ENCODE measurements at regions of chrX and their contacts with region 1.

Region 1: GRCh38 chrX:65595460-65595876 is 60.9 kb upstream of the LAS1L start:
- DNase-seq: peak; percentile 90
- H3K4me3 ChIP-seq: no peak overlapping the region
- H3K27ac ChIP-seq: peak overlapping the region; percentile 92
- H3K4me1 ChIP-seq: peaks cover 28% of the 10 kb centered on the region
- H3K27me3 ChIP-seq: no peaks in the 10 kb centered on the region
- CTCF ChIP-seq: peak; percentile 88 to 98
- POLR2A ChIP-seq: no peak

Region 2: GRCh38 chrX:65720381-65720964 is 125.0 kb after region 1 on chrX:
- CTCF ChIA-PET with region 1: interaction called, 3 read pairs
- POLR2A ChIA-PET with region 1: no interaction called
- dilution Hi-C with region 1: no loop called
- intact Hi-C with region 1: loop called (anchors 1 kb)
- DNase-seq: peak; percentile 75
- H3K4me3 ChIP-seq: no peak overlapping the region
- H3K27ac ChIP-seq: peak overlapping the region; percentile 89
- H3K4me1 ChIP-seq: peaks cover 50% of the 10 kb centered on the region
- H3K27me3 ChIP-seq: no peaks in the 10 kb centered on the region
- CTCF ChIP-seq: peak; percentile 3 to 6
- POLR2A ChIP-seq: no peak

Region 3: DNA sequence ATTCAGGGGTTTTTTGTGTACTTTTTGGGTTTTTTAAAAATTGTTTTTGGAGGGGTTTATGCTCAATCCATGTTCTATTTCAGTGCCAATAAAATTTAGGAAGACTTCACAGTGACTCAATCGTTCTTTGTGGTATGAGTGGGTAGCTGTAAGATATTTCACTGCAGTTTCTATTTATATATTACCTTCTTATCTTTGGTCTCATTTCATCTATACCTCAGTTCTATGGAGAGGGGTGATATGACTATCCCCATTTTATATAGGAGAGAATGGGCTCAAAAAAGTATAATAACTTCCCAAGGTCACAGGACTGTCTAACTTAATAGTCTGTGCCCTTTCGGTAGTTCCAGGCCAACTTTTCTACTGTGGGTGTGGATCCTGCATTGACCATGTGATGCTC is 146.4 kb after region 1 on chrX:
- CTCF ChIA-PET with region 1: no interaction called
- POLR2A ChIA-PET with region 1: no interaction called
- dilution Hi-C with region 1: no loop called
- intact Hi-C with region 1: loop called (anchors 2 kb)
- DNase-seq: no peak
- H3K4me3 ChIP-seq: no peak overlapping the region
- H3K27ac ChIP-seq: no peak overlapping the region
- H3K4me1 ChIP-seq: no peaks in the 10 kb centered on the region
- H3K27me3 ChIP-seq: no peaks in the 10 kb centered on the region
- CTCF ChIP-seq: no peak
- POLR2A ChIP-seq: no peak

Region 4: GRCh38 chrX:65985922-65986588 is 390.6 kb after region 1 on chrX:
- CTCF ChIA-PET with region 1: interaction called, 3 read pairs
- POLR2A ChIA-PET with region 1: no interaction called
- dilution Hi-C with region 1: no loop called
- intact Hi-C with region 1: loop called (anchors 5 kb)
- DNase-seq: peak; percentile 49
- H3K4me3 ChIP-seq: no peak overlapping the region
- H3K27ac ChIP-seq: no peak overlapping the region
- H3K4me1 ChIP-seq: no peaks in the 10 kb centered on the region
- H3K27me3 ChIP-seq: no peaks in the 10 kb centered on the region
- CTCF ChIP-seq: peak; percentile 16 to 25
- POLR2A ChIP-seq: no peak

Measured in endothelial cell of umbilical vein (primary cell).